Endothelial cell of umbilical vein (primary cell): ENCODE measurements at regions of chr14 and their contacts with region 1.

Region 1: GRCh38 chr14:36520601-36521525 is 831 bp upstream of the NKX2-1 start:
- DNase-seq: peak; percentile 6
- H3K4me3 ChIP-seq: no peak overlapping the region
- H3K27ac ChIP-seq: no peak overlapping the region
- H3K4me1 ChIP-seq: peaks cover 6% of the 10 kb centered on the region
- H3K27me3 ChIP-seq: peaks cover 90 to 99% of the 10 kb centered on the region in 2 experiments
- CTCF ChIP-seq: peak; percentile 18 to 45
- POLR2A ChIP-seq: no peak

Region 2: GRCh38 chr14:36570065-36570464 is 49.2 kb after region 1 on chr14:
- CTCF ChIA-PET with region 1: no interaction called
- POLR2A ChIA-PET with region 1: no interaction called
- dilution Hi-C with region 1: no loop called
- intact Hi-C with region 1: no loop called
- DNase-seq: no peak
- H3K4me3 ChIP-seq: no peak overlapping the region
- H3K27ac ChIP-seq: no peak overlapping the region
- H3K4me1 ChIP-seq: no peaks in the 10 kb centered on the region
- H3K27me3 ChIP-seq: peaks cover 2 to 8% of the 10 kb centered on the region in 2 experiments
- CTCF ChIP-seq: no peak
- POLR2A ChIP-seq: no peak

Region 3: GRCh38 chr14:36600431-36600830 is 79.6 kb after region 1 on chr14:
- CTCF ChIA-PET with region 1: no interaction called
- POLR2A ChIA-PET with region 1: no interaction called
- dilution Hi-C with region 1: no loop called
- intact Hi-C with region 1: no loop called
- DNase-seq: no peak
- H3K4me3 ChIP-seq: no peak overlapping the region
- H3K27ac ChIP-seq: no peak overlapping the region
- H3K4me1 ChIP-seq: no peaks in the 10 kb centered on the region
- H3K27me3 ChIP-seq: peaks cover 2 to 5% of the 10 kb centered on the region in 2 experiments
- CTCF ChIP-seq: no peak
- POLR2A ChIP-seq: no peak

Region 4: DNA sequence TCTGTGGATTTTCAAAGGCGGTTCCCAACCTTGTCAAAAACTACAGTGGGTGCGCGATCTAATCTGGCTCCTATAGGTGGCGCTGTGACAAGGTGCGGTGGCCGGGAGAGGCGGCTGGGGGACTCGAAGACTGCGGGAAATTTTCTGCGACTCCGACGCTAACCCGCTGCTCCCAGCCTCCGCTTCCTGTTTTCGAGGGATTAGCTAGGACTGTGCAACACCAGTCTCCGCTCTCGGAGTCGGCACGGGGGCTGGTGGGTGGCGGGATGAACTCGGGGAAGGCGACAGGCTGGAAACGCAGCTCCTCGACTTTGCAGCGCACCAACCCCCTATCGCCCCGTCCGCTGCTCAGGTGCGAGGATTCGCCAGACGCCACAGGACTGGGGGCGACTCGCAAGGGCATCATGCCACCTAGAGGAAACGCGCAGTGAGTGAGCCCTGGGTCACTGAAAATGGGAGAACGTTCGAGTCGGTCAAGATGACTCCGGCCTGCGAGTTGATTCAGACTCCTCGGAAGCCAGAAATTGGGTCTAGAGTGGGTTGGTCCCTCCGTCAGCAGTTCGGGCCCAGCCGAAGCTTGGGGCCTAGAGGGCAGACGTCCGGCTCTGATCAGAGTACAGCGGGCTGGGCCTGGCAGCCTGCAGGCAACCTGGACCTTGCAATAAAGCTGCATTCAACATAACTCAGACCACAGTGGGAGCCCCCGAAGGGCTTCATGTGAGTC is 135.3 kb after region 1 on chr14:
- CTCF ChIA-PET with region 1: no interaction called
- POLR2A ChIA-PET with region 1: no interaction called
- dilution Hi-C with region 1: no loop called
- intact Hi-C with region 1: loop called (anchors 5 kb)
- DNase-seq: no peak
- H3K4me3 ChIP-seq: no peak overlapping the region
- H3K27ac ChIP-seq: no peak overlapping the region
- H3K4me1 ChIP-seq: peaks cover under 1% of the 10 kb centered on the region
- H3K27me3 ChIP-seq: peaks cover 87 to 100% of the 10 kb centered on the region in 2 experiments
- CTCF ChIP-seq: peak; percentile 44 to 54
- POLR2A ChIP-seq: no peak